Activated CD4-positive, alpha-beta memory T cell treated with anti-CD3 and anti-CD28 coated beads for 36 hours (primary cell): ENCODE measurements at regions of chr14 and their contacts with region 1.

Region 1: DNA sequence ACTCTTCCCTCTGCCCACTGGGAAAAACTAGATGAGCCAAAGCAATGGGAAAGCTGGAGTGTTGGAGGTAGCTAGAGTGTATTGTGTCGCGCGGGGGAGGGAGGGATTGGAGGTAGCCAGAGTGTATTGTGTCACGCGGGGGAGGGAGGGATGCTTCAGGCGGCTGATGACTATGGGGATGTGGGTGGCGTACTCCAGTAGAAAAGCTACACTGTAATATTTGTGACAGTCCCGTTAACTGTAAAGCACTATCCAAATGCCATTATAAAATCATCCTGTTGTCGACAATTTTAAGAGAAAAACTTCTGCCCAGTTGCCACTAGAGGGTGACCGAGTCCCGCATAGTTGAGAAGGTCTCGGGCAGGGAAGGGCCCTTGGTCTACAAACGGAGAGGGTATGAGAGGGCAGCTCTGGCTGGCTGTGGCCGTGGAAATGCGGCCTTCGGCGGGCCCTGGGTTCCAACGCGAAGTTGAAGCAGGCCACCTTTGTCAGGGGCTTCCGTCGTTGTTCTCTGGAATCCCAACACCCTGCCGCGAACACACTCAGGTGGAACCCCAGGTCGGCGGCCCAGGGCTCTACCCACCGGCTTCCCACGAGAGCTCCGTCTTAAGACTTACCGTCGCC is 15.1 kb upstream of the PLEK2 start:
- DNase-seq: peak; percentile 80
- H3K4me3 Mint-ChIP-seq: no peak overlapping the region
- H3K27ac Mint-ChIP-seq: no peak overlapping the region
- H3K4me1 Mint-ChIP-seq: peaks cover 3% of the 10 kb centered on the region
- H3K27me3 Mint-ChIP-seq: peaks cover 22% of the 10 kb centered on the region

Region 2: DNA sequence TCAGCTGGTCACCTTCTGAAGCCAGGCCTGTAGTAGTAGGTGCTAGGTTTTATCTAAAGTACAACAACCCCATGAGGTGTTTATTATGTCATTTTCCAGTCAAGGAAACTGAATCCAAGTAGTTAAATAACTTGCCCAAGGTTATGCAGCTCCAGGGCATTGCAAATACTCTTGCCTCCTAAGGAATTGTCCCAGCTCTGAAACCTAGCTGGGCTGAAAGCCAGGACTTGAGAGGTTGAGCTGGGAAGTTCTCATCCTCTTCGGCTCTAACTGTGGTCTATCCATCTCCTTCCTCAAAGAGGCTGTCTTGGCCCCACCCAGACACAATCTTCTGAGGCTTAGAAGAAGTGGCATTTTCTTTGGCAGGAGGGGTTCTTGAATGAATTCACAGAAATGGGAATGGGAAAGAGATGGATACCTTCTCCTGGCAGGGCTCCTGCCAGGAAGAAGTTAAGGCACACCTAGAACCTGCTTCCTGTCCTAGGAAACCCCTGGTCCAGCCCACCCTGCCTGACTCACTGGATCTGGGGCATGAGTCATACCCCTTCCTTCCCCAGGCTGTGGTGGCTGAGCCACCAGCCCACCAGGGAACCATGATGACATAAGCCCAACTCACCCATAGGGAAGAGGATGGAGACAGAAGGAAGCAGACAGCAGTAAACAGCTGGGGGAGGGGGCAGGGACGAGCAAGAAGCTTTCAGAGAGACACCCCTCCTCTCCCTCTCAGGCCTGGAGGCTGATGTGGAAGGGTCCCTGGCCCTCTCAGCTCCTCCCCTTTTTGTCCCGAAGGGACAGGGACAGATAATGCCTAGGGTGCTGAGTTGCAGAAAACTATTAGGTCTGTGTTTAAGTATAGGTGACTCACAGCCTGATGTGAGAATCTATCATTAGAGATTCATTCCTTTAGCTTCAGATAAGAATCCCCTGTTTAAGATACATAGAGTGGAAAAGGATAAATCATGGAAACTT is 13.0 kb before region 1 on chr14:
- CTCF ChIA-PET with region 1: interaction called, 11 read pairs
- POLR2A ChIA-PET with region 1: no interaction called
- intact Hi-C with region 1: no loop called
- DNase-seq: peak; percentile 67
- H3K4me3 Mint-ChIP-seq: no peak overlapping the region
- H3K27ac Mint-ChIP-seq: no peak overlapping the region
- H3K4me1 Mint-ChIP-seq: peaks cover 14% of the 10 kb centered on the region
- H3K27me3 Mint-ChIP-seq: peaks cover 2% of the 10 kb centered on the region

Region 3: DNA sequence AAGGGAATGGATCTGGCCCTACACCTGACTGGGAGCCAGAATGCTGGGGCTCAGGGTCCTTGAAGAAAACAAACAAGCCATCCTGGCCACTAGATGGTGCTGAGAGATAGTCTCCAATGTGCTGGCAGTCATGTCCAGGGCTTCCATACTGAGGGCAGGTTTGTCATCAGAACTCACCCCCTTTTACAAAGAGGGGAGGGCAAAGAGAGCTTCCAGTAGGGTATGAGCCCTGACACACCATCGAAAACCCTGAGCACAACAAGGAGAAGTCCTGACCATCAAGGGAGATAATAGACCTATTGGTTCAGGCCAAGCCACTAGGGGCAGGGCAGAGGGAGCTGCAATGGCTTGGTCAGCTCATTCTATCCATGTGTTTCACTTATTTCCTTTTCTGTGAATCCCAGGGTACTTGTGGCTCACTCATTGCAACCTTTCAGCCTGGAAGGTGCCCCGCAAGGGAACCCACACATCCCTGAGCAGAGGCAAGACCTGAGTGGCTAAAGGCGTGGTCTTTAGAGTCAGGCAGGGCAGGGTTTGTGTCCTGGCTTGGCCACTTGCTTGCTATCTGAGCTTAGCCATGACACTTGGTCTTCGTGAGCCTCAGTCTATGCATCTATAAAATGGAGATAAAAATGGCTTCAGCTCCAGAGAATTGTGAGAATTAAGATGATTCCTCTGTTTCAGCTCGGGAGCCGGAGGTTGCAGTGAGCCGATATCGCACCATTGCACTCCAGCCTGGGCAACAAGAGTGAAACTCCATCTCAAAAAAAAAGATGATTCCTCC is 99.8 kb after region 1 on chr14:
- CTCF ChIA-PET with region 1: interaction called, 63 read pairs
- POLR2A ChIA-PET with region 1: no interaction called
- intact Hi-C with region 1: loop called (anchors 2 kb)
- DNase-seq: peak; percentile 52
- H3K4me3 Mint-ChIP-seq: no peak overlapping the region
- H3K27ac Mint-ChIP-seq: no peak overlapping the region
- H3K4me1 Mint-ChIP-seq: peaks cover 3% of the 10 kb centered on the region
- H3K27me3 Mint-ChIP-seq: peaks cover 22% of the 10 kb centered on the region

Region 4: GRCh38 chr14:67541448-67542387 is 114.6 kb after region 1 on chr14:
- CTCF ChIA-PET with region 1: interaction called, 12 read pairs
- POLR2A ChIA-PET with region 1: no interaction called
- intact Hi-C with region 1: no loop called
- DNase-seq: peak; percentile 37
- H3K4me3 Mint-ChIP-seq: peak overlapping the region; percentile 50
- H3K27ac Mint-ChIP-seq: no peak overlapping the region
- H3K4me1 Mint-ChIP-seq: peaks cover 5% of the 10 kb centered on the region
- H3K27me3 Mint-ChIP-seq: peaks cover 22% of the 10 kb centered on the region

Region 5: GRCh38 chr14:67583711-67584644 is 156.9 kb after region 1 on chr14:
- CTCF ChIA-PET with region 1: interaction called, 24 read pairs
- POLR2A ChIA-PET with region 1: no interaction called
- intact Hi-C with region 1: no loop called
- DNase-seq: peak; percentile 32
- H3K4me3 Mint-ChIP-seq: no peak overlapping the region
- H3K27ac Mint-ChIP-seq: no peak overlapping the region
- H3K4me1 Mint-ChIP-seq: no peaks in the 10 kb centered on the region
- H3K27me3 Mint-ChIP-seq: no peaks in the 10 kb centered on the region

Region 6: DNA sequence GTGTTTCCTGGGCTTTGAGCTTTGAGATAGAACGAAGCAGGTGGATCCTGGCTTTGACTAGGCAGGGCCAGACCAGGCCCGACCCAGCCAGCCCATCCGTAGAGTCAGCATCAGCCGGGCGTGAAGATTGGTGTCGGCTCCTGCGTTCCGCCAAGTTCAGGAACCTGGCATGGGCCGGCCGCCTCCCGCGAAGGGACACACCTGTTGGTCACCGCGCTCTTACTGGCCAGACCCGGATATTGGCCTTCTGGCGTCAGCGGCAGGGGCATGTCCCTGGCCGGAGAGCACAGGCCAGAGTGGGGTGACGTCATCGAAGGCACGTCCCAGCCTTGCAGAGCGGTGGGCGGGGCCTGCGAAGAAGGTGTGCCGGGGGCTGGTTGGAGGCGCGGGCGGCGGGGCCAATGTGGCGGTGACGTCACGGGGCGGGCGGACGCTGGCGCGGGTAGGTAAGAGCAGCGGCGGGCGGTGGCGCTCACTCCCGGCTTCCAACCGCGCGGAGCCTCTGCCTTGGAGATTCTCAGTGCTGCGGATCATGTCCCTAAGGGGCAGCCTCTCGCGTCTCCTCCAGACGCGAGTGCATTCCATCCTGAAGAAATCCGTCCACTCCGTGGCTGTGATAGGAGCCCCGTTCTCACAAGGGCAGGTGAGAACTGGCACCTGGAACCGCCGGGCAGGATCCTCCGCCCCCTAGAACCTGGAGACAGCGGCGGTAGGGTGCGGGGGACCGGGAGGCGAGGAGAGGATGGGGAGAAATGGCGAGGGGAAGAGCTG is 192.5 kb after region 1 on chr14 and contains the start of gene ARG2:
- CTCF ChIA-PET with region 1: interaction called, 11 read pairs
- POLR2A ChIA-PET with region 1: no interaction called
- intact Hi-C with region 1: no loop called
- DNase-seq: peak; percentile 98
- H3K4me3 Mint-ChIP-seq: peak within 1 kb of the TSS; percentile 84
- H3K27ac Mint-ChIP-seq: no peak within 1 kb of the TSS
- H3K4me1 Mint-ChIP-seq: peaks cover 26% of the 10 kb centered on the region
- H3K27me3 Mint-ChIP-seq: peaks cover 15% of the 10 kb centered on the region
- total RNA-seq, gene ARG2: 6.8 to 7.6 TPM

Region 7: GRCh38 chr14:67666750-67667449 is 239.8 kb after region 1 on chr14:
- CTCF ChIA-PET with region 1: interaction called, 12 read pairs
- POLR2A ChIA-PET with region 1: no interaction called
- intact Hi-C with region 1: no loop called
- DNase-seq: peak; percentile 20
- H3K4me3 Mint-ChIP-seq: no peak overlapping the region
- H3K27ac Mint-ChIP-seq: no peak overlapping the region
- H3K4me1 Mint-ChIP-seq: peaks cover 56% of the 10 kb centered on the region
- H3K27me3 Mint-ChIP-seq: no peaks in the 10 kb centered on the region